Left cardiac atrium (tissue), 4 donors: ENCODE measurements at regions of chr3 and their contacts with region 1.

Region 1: GRCh38 chr3:66195347-66195783 is 25.4 kb upstream of the SLC25A26 start:
- DNase-seq: peak; percentile 68
- ATAC-seq: peak; percentile 77 to 84

Region 2: DNA sequence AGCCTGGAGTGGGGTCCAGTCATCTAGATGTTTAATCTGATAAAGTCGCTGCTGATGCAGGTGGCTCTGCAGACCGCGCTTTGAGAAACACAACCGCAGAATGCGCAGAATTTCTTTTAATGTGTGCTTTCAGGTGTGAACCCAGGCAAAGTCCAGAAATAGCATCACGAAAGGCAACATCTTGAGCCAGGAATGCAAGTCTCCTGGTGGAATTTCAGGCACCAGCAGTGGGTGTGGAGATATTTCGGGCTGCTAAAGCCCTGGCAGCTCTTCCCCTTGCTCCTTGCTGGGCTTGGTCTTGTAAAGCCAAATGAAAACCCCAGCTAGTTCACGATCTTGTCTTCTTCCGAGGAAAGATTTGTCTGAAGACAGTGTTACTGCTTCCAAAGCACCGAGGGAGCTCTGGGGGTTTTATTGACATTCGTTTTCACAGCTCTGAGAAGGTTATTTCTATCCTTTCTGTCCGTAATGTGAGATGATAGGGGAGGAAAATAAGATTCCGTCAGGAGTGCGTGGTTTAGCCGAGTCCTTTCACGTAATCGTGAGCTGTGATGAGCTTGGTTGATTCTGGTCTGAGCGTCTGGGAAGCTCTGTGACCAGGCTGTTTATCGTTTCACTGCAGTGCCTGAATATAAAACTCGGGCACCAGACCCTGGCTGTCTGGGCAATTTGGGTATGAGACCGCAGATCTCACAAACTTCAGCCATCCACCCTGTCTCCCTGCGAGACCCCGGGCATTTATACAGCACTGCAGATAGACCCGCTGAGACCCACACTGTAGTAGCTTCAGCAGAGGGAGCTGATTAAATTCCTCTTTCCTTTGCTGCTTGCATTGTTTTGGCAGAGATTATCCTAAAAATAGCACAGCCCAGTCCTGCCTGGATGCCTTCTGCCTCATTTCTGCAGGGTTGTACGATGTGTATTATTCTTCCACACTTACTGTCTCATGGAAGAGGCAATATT is 41.6 kb before region 1 on chr3:
- intact Hi-C with region 1: loop called in 1 of 2 experiments (anchors 5 kb)
- DNase-seq: no peak
- ATAC-seq: peak; percentile 85